ENCODE measurements at regions of chr16 and their contacts with region 1.

Region 1: DNA sequence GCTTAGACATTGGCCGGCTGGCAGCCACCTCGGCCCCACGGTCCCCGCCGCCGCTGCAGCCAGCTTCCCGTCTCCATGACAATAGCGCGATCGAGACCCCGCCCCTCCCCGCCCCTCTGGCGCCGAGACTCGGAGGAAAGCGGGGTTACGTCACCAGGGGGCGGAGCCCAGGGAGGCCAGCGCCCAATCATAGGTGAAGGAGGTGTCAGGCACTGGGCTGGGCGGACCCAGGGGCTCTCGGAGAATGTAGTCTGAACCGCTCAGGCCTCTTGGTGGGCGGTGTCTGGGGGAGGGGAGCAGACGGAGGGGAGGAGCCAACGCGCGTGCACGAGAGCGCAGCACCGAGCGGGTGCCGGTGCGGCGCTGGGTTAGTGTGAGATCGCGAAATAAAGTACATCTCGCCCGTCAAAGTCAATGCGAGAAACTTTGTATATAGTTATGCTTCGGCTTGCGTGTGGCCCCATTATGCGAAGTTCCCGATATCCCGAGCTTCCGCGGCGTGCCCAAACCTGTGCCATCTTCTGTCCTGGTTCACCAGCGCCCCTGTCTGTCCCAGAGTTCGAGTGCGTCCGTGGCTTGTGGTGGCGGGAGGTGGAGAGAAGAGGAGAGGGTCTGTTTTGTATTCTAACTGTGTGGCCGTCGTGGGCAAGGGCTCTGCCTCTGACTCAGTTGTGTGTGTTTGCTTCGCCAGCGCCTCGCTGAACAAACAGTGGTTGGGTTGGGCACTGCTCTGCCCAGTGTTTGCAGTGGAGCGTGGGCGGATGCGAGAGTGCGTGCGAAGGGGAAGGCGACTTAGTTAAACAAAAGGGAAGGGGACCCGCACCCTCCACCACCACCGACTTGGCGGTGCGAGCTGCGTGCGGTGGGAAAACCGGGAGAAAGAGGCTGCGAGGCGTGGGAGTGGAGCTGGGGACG is 1.3 kb upstream of the IRX5 start:
- DNase-seq: peak; percentile 100
- ATAC-seq: peak; percentile 92 to 96 (median 95)
- H3K4me3 ChIP-seq: peak overlapping the region; percentile 58 to 90 (median 74)
- H3K27ac ChIP-seq: peak overlapping the region; percentile 74 to 96 (median 88)
- H3K4me1 ChIP-seq: peaks cover 0 to 39% (median 25%) of the 10 kb centered on the region in 9 donors
- H3K27me3 ChIP-seq: peaks cover 0 to 93% (median 36%) of the 10 kb centered on the region in 7 donors
- CTCF ChIP-seq: peak in 5 of 9 donors; percentile 10 to 48 (median 41)

Region 2: GRCh38 chr16:53503270-53503923 is 1426.0 kb before region 1 on chr16:
- intact Hi-C with region 1: loop called in 1 of 10 experiments (anchors 5 kb)
- DNase-seq: peak; percentile 100
- ATAC-seq: peak; percentile 92 to 96 (median 94)
- H3K4me3 ChIP-seq: peak overlapping the region; percentile 83 to 99 (median 88)
- H3K27ac ChIP-seq: peak overlapping the region; percentile 91 to 99 (median 94)
- H3K4me1 ChIP-seq: peaks cover 5 to 47% (median 40%) of the 10 kb centered on the region in 9 donors
- H3K27me3 ChIP-seq: no peaks in the 10 kb centered on the region
- CTCF ChIP-seq: no peak

Region 3: DNA sequence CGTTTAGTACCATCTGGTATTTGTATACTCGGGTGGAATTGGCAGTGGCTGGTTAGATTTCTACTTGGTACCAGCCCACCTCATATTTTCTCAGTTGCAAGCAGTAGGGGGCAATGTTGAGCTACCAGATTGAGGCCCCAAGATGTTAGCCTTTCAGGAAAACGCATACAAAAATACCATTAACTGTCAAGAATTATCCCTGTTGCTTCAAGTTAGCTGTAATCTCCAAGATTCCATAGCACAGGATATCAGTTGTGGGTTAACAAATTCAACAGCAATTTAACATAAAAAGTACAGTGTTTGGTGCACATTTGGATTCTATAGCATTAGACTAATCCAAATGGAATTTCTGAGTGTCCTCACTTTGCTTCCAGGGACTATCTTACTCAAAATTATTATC is 1037.2 kb before region 1 on chr16:
- intact Hi-C with region 1: loop called in 2 of 10 experiments (anchors 10 kb)
- DNase-seq: peak in 1 of 2 donors; percentile 55
- ATAC-seq: peak in 7 of 8 donors; percentile 58 to 84 (median 69)
- H3K4me3 ChIP-seq: no peak overlapping the region
- H3K27ac ChIP-seq: no peak overlapping the region
- H3K4me1 ChIP-seq: peaks cover 4 to 43% (median 31%) of the 10 kb centered on the region in 9 donors
- H3K27me3 ChIP-seq: no peaks in the 10 kb centered on the region
- CTCF ChIP-seq: peak; percentile 50 to 84 (median 75)

Region 4: DNA sequence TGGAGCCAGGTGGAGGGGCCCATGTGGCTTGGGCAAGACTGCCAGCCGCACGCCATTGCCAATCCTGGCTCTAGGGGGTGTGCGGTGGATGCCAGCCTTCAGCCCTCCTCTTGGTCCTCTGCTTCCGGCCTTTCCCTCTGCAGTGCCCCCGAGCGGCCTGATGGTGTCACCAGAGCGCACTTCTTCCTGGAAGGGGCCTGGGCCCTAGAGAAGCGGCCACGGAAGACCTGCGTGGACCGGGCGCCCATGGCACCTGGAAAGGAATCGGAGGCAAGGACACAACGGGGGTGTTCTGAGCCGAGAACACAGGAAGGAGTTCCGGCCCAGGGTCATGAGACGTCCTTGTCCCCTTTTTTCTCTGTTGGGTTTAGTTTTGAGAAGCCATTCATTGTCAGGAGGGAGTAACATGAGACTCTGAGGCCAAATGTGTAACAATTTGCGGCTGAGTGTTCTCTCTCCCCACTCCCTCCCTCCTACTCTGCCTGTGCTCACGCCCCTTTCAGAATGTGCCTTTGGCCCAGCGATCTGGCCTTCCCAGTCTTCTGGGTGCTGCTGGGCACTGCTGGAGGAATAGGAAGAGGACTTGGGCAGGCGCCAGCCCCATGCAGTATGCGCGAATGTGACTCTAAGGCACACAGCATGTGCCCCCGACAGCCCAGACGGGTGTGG is 735.5 kb before region 1 on chr16:
- intact Hi-C with region 1: loop called in 2 of 10 experiments (anchors 10 kb)
- DNase-seq: peak; percentile 82 to 85
- ATAC-seq: peak; percentile 82 to 94 (median 90)
- H3K4me3 ChIP-seq: peak overlapping the region in 8 of 10 donors; percentile 10 to 47 (median 34)
- H3K27ac ChIP-seq: peak overlapping the region; percentile 76 to 91 (median 86)
- H3K4me1 ChIP-seq: peaks cover 0 to 25% (median 13%) of the 10 kb centered on the region in 9 donors
- H3K27me3 ChIP-seq: peaks cover 0 to 2% (median 0%) of the 10 kb centered on the region in 7 donors
- CTCF ChIP-seq: peak; percentile 78 to 93 (median 87)

Region 5: DNA sequence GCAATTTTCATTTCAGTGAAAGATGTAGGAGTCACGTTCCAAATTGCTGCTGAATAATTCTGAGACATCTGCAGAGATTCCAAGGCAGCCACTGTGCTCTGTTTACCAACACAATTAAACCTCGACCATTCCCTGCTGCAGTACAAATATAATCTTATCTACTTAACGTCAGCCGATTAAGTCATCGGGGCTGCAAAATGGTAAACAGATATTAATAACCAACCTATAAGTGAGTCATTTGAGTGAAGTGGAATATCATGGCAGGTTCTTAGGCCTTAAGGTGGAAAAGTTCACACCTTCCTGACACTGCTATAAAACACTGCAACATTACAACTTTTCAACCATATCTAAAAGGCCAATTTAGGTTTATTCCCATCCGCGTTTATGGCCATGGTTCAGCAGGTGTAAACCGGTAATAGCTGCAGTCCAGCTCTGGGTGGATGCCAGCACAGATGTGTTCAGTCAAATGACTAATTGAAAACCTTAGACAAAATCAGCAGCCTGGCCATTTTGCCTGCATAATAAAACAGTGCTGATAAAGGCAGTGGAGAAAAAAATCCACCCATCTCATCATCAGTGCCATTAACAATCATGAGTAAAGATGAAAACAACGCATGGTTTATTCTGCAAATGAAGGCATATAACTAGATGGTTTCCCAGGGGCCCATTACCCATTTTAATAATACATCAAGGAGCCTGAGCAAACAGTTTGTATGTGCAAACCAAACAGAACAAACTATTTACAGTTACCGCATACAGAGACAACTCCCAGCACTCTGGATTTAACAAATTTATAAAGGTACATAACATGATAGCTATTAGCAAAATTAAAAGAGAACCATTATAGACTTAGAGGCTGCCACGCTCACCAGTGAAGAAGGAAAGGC is 439.9 kb before region 1 on chr16:
- intact Hi-C with region 1: loop called in 1 of 10 experiments (anchors 10 kb)
- DNase-seq: no peak
- ATAC-seq: peak in 5 of 8 donors; percentile 29 to 74 (median 61)
- H3K4me3 ChIP-seq: no peak overlapping the region
- H3K27ac ChIP-seq: peak overlapping the region in 8 of 10 donors; percentile 29 to 69 (median 52)
- H3K4me1 ChIP-seq: peaks cover 6 to 48% (median 24%) of the 10 kb centered on the region in 9 donors
- H3K27me3 ChIP-seq: no peaks in the 10 kb centered on the region
- CTCF ChIP-seq: no peak

Region 6: GRCh38 chr16:54633943-54634362 is 295.4 kb before region 1 on chr16:
- intact Hi-C with region 1: loop called in 1 of 10 experiments (anchors 10 kb)
- DNase-seq: peak in 1 of 2 donors; percentile 27
- ATAC-seq: peak in 4 of 8 donors; percentile 33 to 68 (median 50)
- H3K4me3 ChIP-seq: no peak overlapping the region
- H3K27ac ChIP-seq: no peak overlapping the region
- H3K4me1 ChIP-seq: peaks cover 0 to 7% (median 0%) of the 10 kb centered on the region in 9 donors
- H3K27me3 ChIP-seq: no peaks in the 10 kb centered on the region
- CTCF ChIP-seq: peak in 8 of 9 donors; percentile 21 to 68 (median 56)

Region 7: DNA sequence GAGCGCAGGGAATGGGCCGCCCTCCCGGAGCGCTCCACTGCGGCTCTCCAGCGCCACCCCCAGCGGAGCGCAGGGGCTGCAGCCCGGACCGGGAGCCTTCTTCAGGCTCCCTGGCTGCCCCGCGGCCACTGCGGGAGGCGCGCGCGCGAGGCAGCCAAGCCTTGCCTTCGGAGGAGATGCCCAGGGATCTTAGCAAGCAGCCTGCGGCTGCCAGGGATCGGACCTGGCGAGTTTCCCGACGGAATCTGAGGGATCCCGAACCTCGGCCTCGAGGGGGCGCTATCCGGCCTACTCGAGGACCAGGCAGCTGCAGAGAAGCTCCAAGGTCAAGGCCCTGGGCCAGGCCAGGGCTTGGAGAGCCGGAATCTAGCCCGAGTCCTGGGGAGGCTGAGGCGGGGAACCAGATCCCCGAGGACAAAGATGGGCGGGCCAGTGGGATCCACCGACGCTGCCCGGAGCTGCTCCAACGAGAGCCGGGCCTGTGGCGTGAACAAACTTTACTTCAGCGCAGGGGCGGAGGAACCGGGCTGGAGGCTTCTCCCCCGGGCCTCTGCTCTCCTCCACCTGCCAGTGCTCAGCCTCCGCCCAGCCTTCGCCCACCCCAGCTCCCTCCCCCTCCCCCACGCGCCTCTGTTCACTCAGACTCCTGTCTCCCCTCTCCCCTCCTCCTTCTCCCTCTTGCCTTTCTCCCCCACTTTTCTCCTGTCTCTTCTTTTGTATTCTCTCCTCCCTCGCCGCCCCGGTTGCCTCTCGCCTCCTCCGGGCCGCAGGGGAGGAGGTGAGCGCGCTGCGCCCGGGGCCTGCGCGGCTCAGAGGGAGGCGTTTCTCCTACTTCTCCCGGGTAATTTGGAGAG is 394.5 kb after region 1 on chr16 and contains the start of gene IRX6:
- intact Hi-C with region 1: loop called in 2 of 10 experiments (anchors 10 kb)
- DNase-seq: peak; percentile 68 to 71
- ATAC-seq: peak; percentile 75 to 91 (median 83)
- H3K4me3 ChIP-seq: peak within 1 kb of the TSS; percentile 23 to 64 (median 49)
- H3K27ac ChIP-seq: peak within 1 kb of the TSS in 8 of 10 donors; percentile 74 to 97 (median 92)
- H3K4me1 ChIP-seq: peaks cover 0 to 35% (median 7%) of the 10 kb centered on the region in 9 donors
- H3K27me3 ChIP-seq: peaks cover 4 to 92% (median 65%) of the 10 kb centered on the region in 7 donors
- CTCF ChIP-seq: peak in 8 of 9 donors; percentile 44 to 82 (median 64)
- total RNA-seq, gene IRX6: 0.18 to 28.1 (median 14.3) TPM